ENCODE measurements at regions of chr13 and their contacts with region 1.

Region 1: GRCh38 chr13:72963762-72964161 is 95.0 kb upstream of the KLF5 start:
- DNase-seq: no peak
- H3K4me3 ChIP-seq: no peak overlapping the region
- H3K27ac ChIP-seq: no peak overlapping the region
- H3K4me1 ChIP-seq: peaks cover 30% of the 10 kb centered on the region
- H3K27me3 ChIP-seq: no peaks in the 10 kb centered on the region
- CTCF ChIP-seq: no peak

Region 2: DNA sequence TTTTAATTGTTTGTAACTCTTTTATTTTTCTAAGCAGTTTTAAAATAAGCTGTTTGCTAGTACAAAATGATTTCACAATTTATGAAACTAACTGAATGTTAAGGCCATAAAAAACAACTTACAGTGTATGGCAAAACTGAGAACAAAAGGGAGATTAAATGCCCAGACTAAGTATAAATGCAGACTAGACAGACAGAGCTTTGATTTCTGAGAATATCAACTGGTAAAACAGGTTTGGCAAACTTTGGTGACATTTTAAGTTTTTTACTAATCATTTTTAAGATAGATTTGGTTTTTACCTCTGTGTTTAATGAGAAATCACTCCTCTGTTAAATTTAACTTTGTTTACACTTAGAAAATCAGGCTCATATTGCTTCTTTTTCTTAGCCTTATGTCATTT is 32.5 kb before region 1 on chr13:
- CTCF ChIA-PET with region 1: no interaction called
- POLR2A ChIA-PET with region 1: no interaction called
- intact Hi-C with region 1: loop called (anchors 1 kb)
- DNase-seq: no peak
- H3K4me3 ChIP-seq: no peak overlapping the region
- H3K27ac ChIP-seq: no peak overlapping the region
- H3K4me1 ChIP-seq: peaks cover 10% of the 10 kb centered on the region; the same call in 1 of the 2 replicates
- H3K27me3 ChIP-seq: no peaks in the 10 kb centered on the region
- CTCF ChIP-seq: no peak

Region 3: DNA sequence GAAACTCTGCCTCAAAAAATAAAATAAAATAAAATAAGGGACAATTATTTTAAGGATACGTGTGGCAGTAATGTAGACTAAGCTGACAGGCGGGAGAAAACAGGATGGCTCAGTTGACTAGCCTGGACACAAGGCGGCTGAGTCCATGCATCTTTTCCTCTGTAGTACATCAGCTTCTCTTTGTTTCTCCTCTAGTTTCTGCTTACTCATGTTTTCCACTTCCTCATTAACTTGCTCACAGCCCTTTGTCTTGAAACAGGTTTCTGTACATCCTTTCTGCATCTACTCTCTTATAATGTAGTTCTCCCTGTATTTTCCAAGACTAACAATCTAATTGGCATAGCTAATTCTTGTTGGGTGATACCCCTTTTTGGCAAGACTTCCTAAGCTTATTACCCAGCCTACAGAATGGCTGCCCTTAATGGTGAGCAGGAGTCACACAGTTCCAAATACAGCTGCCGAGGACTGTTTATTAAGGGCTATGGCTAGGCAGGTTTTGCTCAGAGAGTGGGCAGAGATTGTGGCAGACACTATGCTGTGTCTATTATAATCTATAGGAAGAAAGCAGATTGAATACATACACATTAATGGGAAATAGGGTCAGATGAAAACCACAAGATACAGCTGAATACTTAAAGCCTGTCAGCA is 36.4 kb after region 1 on chr13:
- CTCF ChIA-PET with region 1: no interaction called
- POLR2A ChIA-PET with region 1: no interaction called
- intact Hi-C with region 1: no loop called
- DNase-seq: peak; percentile 6 to 49
- H3K4me3 ChIP-seq: no peak overlapping the region
- H3K27ac ChIP-seq: peak overlapping the region; percentile 33
- H3K4me1 ChIP-seq: no peaks in the 10 kb centered on the region
- H3K27me3 ChIP-seq: no peaks in the 10 kb centered on the region
- CTCF ChIP-seq: no peak